ENCODE measurements at regions of chr20 and their contacts with region 1.

Region 1: GRCh38 chr20:53055367-53056060 is 83.4 kb downstream of the TSHZ2 start:
- DNase-seq: no peak
- ATAC-seq: no peak
- H3K4me3 ChIP-seq: no peak overlapping the region
- H3K4me3 Mint-ChIP-seq: no peak overlapping the region
- H3K27ac ChIP-seq: no peak overlapping the region
- H3K27ac Mint-ChIP-seq: peak overlapping the region in 1 of 9 donors; percentile 80
- H3K4me1 ChIP-seq: no peaks in the 10 kb centered on the region
- H3K4me1 Mint-ChIP-seq: peaks cover 5 to 55% (median 25%) of the 10 kb centered on the region in 7 donors
- H3K27me3 ChIP-seq: no peaks in the 10 kb centered on the region
- H3K27me3 Mint-ChIP-seq: peaks cover 0 to 3% (median 0%) of the 10 kb centered on the region in 5 donors

Region 2: DNA sequence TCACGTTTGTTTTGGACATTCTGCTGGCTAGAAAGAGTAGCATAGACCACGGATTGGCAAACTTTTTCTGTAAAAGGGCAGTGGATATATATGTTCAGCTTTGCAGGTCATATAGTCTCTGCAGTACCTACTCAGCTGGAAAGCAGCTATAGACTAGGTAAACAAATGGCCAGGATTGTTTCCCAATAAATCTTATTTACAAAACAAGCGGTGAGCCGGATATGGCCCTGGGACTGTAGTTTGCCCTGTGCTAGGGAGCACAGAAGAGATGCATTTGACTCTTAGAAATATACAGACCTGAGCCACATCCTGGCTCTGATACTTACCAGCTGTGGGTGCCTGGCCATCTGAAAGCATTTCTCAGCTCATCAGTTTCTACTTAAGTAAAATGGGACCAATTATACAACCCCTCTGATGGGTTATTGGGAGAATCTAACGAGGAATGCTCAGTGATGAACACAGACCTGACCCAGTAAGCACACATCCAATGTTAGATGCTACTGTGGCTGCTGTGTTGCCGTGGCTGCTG is 37.3 kb after region 1 on chr20:
- CTCF ChIA-PET with region 1: no interaction called
- POLR2A ChIA-PET with region 1: interaction called, 3 read pairs
- intact Hi-C with region 1: loop called in 1 of 2 experiments (anchors 5 kb)
- DNase-seq: no peak
- ATAC-seq: no peak
- H3K4me3 ChIP-seq: no peak overlapping the region
- H3K4me3 Mint-ChIP-seq: no peak overlapping the region
- H3K27ac ChIP-seq: no peak overlapping the region
- H3K27ac Mint-ChIP-seq: no peak overlapping the region
- H3K4me1 ChIP-seq: no peaks in the 10 kb centered on the region
- H3K4me1 Mint-ChIP-seq: peaks cover 4 to 55% (median 18%) of the 10 kb centered on the region in 7 donors
- H3K27me3 ChIP-seq: no peaks in the 10 kb centered on the region
- H3K27me3 Mint-ChIP-seq: no peaks in the 10 kb centered on the region

Measured in naive thymus-derived CD4-positive, alpha-beta T cell (primary cell).